ENCODE measurements at regions of chr10 and their contacts with region 1.

Region 1: GRCh38 chr10:3852147-3852904 is 67.3 kb upstream of the KLF6 start:
- DNase-seq: peak; percentile 94
- H3K4me3 Mint-ChIP-seq: peak overlapping the region; percentile 54
- H3K27ac Mint-ChIP-seq: peak overlapping the region; percentile 98
- H3K4me1 Mint-ChIP-seq: peaks cover 33% of the 10 kb centered on the region
- H3K27me3 Mint-ChIP-seq: no peaks in the 10 kb centered on the region
- CTCF ChIP-seq: no peak

Region 2: DNA sequence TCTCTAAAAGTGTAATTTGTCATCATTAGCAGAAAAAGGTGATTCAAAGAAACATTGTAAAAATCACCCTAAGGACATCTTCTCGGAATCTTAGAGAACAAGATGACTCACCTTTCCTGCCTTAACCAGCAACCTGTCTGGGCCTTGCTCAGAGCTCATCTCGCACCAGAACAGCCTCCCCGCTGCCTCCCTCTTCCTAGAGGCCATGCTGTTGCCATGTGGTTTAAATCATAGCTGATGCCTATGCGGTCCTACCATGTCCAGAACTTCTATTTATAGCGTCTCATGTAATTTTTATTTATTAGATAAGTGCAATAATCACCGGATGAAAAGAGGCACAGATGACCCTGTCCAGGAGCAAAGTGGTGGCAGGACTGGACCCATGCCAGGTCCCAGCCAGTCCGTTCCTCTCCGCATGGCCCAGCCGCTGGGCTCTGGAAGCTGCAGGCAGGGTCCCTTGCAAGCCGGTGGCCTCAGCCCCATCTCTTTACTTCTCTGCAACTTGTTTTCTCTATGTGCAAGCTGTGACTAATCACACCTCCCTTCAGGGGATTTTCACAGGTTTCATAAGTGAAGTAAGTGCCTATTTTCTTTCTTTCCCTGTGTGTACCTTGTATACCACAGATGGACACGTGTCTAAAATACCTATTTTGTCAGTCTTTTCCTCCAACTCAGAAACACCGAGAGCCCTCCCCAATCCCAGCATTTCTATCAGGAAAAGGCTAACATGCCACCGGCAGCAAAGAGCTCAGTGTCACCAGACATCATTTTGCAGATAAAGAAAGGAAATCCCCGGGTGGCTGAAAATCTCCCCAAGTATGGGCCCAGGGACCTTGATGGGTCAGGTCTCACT is 94.5 kb before region 1 on chr10:
- CTCF ChIA-PET with region 1: no interaction called
- POLR2A ChIA-PET with region 1: interaction called, 10 read pairs
- intact Hi-C with region 1: no loop called
- DNase-seq: peak; percentile 91
- H3K4me3 Mint-ChIP-seq: peak overlapping the region; percentile 48
- H3K27ac Mint-ChIP-seq: peak overlapping the region; percentile 62
- H3K4me1 Mint-ChIP-seq: peaks cover 52% of the 10 kb centered on the region
- H3K27me3 Mint-ChIP-seq: no peaks in the 10 kb centered on the region
- CTCF ChIP-seq: no peak

Region 3: DNA sequence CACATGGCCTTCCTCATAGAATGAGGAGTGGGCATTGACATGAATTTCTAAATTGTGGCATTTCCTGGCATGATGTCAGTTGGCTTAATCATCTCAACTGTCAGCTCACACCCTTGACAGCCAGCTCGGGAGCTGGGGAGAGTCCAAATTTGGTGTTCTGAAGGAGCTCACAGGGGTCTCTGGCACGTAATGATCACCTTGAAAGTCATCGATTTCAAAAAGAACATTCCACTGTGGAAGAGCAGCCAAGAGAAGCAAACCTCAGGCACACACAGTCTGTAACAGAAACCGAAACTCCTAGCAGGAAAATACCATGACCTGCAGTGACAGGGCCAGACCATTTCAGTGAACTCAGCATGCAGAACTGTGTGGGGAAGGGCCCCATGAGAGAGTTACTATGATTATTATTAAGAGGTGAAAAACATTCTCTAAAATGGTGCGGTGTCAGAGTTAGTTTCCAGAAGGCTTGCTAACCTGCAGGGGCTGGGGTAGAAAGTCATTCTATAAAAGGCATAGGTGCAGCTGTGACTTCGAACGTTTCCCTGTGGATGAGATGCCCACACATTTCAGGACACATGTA is 40.9 kb before region 1 on chr10:
- CTCF ChIA-PET with region 1: interaction called, 16 read pairs
- POLR2A ChIA-PET with region 1: interaction called, 237 read pairs
- intact Hi-C with region 1: loop called (anchors 1 kb)
- DNase-seq: peak; percentile 89
- H3K4me3 Mint-ChIP-seq: peak overlapping the region; percentile 61
- H3K27ac Mint-ChIP-seq: peak overlapping the region; percentile 100
- H3K4me1 Mint-ChIP-seq: peaks cover 51% of the 10 kb centered on the region
- H3K27me3 Mint-ChIP-seq: no peaks in the 10 kb centered on the region
- CTCF ChIP-seq: no peak

Region 4: GRCh38 chr10:3835770-3836169 is 16.6 kb before region 1 on chr10:
- CTCF ChIA-PET with region 1: interaction called, 4 read pairs
- POLR2A ChIA-PET with region 1: interaction called, 22 read pairs
- intact Hi-C with region 1: no loop called
- DNase-seq: no peak
- H3K4me3 Mint-ChIP-seq: no peak overlapping the region
- H3K27ac Mint-ChIP-seq: no peak overlapping the region
- H3K4me1 Mint-ChIP-seq: peaks cover 5% of the 10 kb centered on the region
- H3K27me3 Mint-ChIP-seq: no peaks in the 10 kb centered on the region
- CTCF ChIP-seq: no peak

Region 5: GRCh38 chr10:3895045-3895631 is 42.8 kb after region 1 on chr10:
- CTCF ChIA-PET with region 1: interaction called, 3 read pairs
- POLR2A ChIA-PET with region 1: interaction called, 92 read pairs
- intact Hi-C with region 1: no loop called
- DNase-seq: peak; percentile 10
- H3K4me3 Mint-ChIP-seq: no peak overlapping the region
- H3K27ac Mint-ChIP-seq: no peak overlapping the region
- H3K4me1 Mint-ChIP-seq: peaks cover 31% of the 10 kb centered on the region
- H3K27me3 Mint-ChIP-seq: no peaks in the 10 kb centered on the region
- CTCF ChIP-seq: no peak

Region 6: DNA sequence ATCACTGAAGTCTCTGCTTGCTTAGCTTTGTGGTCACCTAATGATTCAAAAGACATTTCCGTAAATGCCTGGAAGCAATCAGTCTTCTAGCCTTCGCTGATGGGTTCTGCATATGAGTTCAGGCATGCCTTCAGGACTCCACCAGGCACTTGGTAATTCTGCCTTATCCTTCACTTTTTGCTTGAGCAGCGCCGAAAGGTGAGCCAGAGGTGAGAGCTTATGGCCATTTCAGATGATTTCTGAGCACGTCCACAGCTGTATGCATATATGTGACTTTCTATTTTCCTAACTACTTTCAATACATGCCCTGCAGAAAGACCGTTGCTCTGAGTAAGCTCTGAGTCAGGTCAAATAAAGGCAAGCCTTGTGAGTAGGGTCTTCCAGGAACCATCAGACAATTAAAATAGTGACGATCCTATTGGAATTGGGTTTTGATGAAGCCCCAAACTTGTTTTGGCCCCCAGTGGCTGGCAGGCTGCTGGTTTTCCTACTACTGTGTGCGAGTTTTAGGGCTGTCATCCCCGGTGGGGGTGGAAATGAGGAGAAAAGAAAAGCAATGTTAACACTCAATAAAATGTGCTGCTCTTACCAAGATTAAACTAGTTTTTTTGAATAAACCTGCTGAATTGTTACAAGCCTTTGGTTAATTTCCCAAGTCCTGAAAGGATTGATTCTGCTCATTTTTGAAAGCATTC is 819.3 kb after region 1 on chr10:
- CTCF ChIA-PET with region 1: no interaction called
- POLR2A ChIA-PET with region 1: interaction called, 16 read pairs
- intact Hi-C with region 1: no loop called
- DNase-seq: peak; percentile 72
- H3K4me3 Mint-ChIP-seq: peak overlapping the region; percentile 56
- H3K27ac Mint-ChIP-seq: peak overlapping the region; percentile 90
- H3K4me1 Mint-ChIP-seq: peaks cover 27% of the 10 kb centered on the region
- H3K27me3 Mint-ChIP-seq: no peaks in the 10 kb centered on the region
- CTCF ChIP-seq: no peak